Activated CD4-positive, alpha-beta T cell treated with anti-CD3 and anti-CD28 coated beads, Interleukin-2, amount 10 ng/mL, durations not matched to agents 24 days and 14 days (primary cell): ENCODE measurements at regions of chr13 and their contacts with region 1.

Region 1: DNA sequence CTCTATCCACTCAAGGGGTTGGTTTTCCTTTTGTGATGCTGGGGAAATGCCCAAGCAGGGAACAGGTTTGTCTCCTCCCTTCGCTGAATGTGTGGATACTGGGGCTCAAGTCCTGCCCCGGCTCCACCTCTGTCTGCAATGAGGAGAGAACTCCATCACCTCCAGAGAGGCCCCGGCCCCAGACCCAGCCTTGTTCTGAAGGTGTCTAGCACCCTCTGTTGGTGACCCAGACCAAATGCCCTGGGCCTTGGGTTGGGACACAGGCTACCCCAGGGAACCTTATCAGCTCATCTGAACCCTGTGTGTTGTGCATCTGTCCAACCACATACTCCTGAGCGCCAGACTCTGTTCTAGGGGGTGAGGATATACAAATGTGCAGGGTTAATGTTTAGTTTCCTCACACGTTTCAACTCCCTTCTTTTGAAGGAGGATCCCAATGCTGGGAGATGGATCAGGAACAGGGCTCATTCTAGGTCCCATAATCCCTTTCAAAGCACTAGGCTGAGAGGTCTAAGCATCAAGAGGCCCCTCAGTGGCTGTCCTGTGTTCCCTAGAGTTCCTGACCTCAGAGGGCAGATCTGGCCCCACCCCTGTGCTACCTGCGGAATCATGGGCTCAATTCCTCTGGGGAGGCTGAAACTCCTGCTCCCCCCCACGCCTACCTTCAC is 112.5 kb upstream of the SLC7A1 start:
- DNase-seq: peak; percentile 84
- H3K4me3 Mint-ChIP-seq: no peak overlapping the region
- H3K27ac Mint-ChIP-seq: no peak overlapping the region
- H3K4me1 Mint-ChIP-seq: no peaks in the 10 kb centered on the region
- H3K27me3 Mint-ChIP-seq: peaks cover 27% of the 10 kb centered on the region

Region 2: DNA sequence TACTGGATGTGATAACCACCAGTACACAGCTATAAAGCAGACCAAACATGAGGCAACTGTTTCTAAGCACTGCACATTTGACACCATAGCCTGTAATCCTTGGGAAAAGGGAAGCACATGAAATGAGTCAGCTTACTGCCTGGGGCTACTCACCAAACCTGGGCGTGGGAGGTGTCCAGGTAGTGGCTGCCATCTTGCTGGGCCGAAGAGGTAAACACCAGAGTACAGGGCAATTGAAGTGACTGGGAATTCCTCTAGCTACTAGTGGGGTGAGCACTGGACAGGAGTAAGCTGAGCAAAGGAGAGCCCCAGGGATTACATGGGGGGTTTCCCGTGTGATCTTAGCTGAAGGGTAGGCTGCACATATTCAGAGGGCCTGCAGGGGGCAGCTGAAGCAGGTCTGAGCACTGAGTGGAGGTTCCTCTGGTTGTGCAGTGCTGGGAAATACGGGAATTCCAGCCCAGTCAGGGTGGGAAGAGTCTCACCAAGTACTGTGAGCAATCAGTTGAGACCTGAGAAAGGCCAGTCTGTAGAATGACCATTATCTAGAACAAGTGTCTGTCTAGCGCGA is 253.0 kb before region 1 on chr13:
- intact Hi-C with region 1: loop called (anchors 5 kb)
- DNase-seq: no peak
- H3K4me3 Mint-ChIP-seq: no peak overlapping the region
- H3K27ac Mint-ChIP-seq: no peak overlapping the region
- H3K4me1 Mint-ChIP-seq: no peaks in the 10 kb centered on the region
- H3K27me3 Mint-ChIP-seq: peaks cover 11% of the 10 kb centered on the region

Region 3: GRCh38 chr13:29472332-29472961 is 235.6 kb before region 1 on chr13:
- intact Hi-C with region 1: loop called (anchors 1 kb)
- DNase-seq: peak; percentile 84
- H3K4me3 Mint-ChIP-seq: no peak overlapping the region
- H3K27ac Mint-ChIP-seq: no peak overlapping the region
- H3K4me1 Mint-ChIP-seq: no peaks in the 10 kb centered on the region
- H3K27me3 Mint-ChIP-seq: peaks cover 10% of the 10 kb centered on the region

Region 4: DNA sequence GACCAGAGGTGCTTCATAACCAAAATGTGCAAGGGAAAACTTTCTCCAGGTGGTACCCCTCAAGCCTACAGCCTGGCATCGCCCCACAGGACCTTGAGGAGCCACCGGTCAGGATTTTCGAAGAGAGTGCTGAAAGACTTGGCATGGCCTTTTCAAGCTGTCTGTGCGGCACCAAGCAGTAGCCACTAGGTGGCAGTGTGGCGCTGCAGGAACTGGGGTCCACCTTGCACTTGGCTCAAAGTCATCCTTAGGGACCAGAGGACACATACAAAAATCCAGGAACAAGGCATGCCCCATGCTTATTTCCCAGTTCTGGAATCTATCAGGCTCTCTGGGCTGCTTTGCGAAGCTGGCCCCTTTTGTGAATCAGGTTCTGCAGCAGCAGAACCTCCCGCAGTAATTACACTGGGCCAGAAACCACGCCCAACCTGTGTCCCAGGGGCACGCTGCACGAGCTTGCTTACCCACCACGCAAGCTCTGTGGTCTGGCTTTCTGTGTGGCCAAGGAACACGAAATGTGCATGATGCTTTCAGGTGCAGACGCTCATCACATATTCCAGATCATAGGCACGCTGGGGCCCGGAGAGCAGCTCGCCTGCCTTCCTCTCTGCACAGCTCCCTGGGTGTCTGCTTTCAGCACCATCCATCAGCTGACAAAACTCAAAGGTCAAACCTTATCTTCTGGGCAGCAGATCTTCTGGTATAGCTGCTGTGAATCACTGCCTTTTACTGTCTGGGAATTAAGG is 199.7 kb before region 1 on chr13:
- intact Hi-C with region 1: loop called (anchors 2 kb)
- DNase-seq: peak; percentile 92
- H3K4me3 Mint-ChIP-seq: no peak overlapping the region
- H3K27ac Mint-ChIP-seq: no peak overlapping the region
- H3K4me1 Mint-ChIP-seq: peaks cover 1% of the 10 kb centered on the region
- H3K27me3 Mint-ChIP-seq: peaks cover 2% of the 10 kb centered on the region